ENCODE measurements at regions of chr4 and their contacts with region 1.

Region 1: GRCh38 chr4:27534488-27534887 is 673.8 kb downstream of the STIM2 start:
- DNase-seq: no peak
- H3K4me3 ChIP-seq: no peak overlapping the region
- H3K27ac ChIP-seq: no peak overlapping the region
- H3K4me1 ChIP-seq: no peaks in the 10 kb centered on the region
- H3K27me3 ChIP-seq: no peaks in the 10 kb centered on the region
- CTCF ChIP-seq: no peak

Region 2: DNA sequence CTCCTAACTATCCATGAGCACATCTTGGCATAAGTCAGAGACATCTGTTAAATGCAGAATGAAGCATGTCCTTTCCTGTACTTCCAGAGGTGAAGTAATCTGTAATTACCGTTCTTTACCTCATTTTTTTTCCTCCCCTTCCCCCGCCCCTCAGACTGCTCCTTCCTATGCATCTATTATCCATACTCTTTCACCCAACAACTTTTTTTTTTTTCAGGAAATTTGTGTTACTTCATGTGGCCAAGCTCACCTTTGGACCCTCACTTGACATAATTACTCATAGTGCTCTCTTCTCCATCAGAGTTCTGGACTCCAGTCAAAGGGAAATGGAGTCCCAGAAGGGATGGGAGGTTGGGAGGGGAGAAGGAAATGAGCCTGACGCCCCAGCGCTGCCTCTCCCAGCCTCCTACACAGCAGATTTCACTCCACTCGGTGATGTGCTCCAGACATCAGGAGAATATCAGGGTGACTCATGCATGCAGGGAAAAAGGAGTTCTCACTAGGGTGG is 105.1 kb before region 1 on chr4:
- CTCF ChIA-PET with region 1: no interaction called
- POLR2A ChIA-PET with region 1: no interaction called
- intact Hi-C with region 1: no loop called
- DNase-seq: no peak
- H3K4me3 ChIP-seq: no peak overlapping the region
- H3K27ac ChIP-seq: no peak overlapping the region
- H3K4me1 ChIP-seq: no peaks in the 10 kb centered on the region
- H3K27me3 ChIP-seq: no peaks in the 10 kb centered on the region
- CTCF ChIP-seq: no peak

Region 3: GRCh38 chr4:27811948-27812347 is 277.5 kb after region 1 on chr4:
- CTCF ChIA-PET with region 1: interaction called, 13 read pairs
- POLR2A ChIA-PET with region 1: no interaction called
- intact Hi-C with region 1: no loop called
- DNase-seq: no peak
- H3K4me3 ChIP-seq: no peak overlapping the region
- H3K27ac ChIP-seq: no peak overlapping the region
- H3K4me1 ChIP-seq: no peaks in the 10 kb centered on the region
- H3K27me3 ChIP-seq: no peaks in the 10 kb centered on the region
- CTCF ChIP-seq: no peak

Region 4: DNA sequence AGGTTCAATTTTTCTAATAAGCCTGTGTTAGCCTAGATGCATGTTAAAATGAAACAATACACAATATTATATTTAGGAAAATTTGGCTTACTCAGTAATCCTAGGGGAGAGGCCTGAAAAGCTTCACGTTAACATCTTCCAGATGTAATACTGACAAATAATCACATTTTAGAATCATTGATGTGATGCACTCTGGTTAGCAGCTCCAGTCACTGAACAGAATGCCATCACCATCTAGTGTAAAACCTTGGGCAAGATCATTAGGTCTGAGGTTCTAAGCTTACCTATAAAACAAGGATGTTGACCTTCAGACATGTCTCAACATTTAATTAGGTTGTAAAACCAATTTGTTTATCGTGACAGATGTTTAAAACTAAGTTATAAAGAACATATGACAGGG is 1030.9 kb after region 1 on chr4:
- CTCF ChIA-PET with region 1: no interaction called
- POLR2A ChIA-PET with region 1: interaction called, 14 read pairs
- intact Hi-C with region 1: no loop called
- DNase-seq: no peak
- H3K4me3 ChIP-seq: no peak overlapping the region
- H3K27ac ChIP-seq: no peak overlapping the region
- H3K4me1 ChIP-seq: no peaks in the 10 kb centered on the region
- H3K27me3 ChIP-seq: no peaks in the 10 kb centered on the region
- CTCF ChIP-seq: no peak

Measured in PC-9 (cell line).